Activated CD8-positive, alpha-beta T cell treated with anti-CD3 and anti-CD28 coated beads, Interleukin-2, amount 10 ng/mL, durations not matched to agents 7 days and 5 days (primary cell): ENCODE measurements at regions of chr7 and their contacts with region 1.

Region 1: DNA sequence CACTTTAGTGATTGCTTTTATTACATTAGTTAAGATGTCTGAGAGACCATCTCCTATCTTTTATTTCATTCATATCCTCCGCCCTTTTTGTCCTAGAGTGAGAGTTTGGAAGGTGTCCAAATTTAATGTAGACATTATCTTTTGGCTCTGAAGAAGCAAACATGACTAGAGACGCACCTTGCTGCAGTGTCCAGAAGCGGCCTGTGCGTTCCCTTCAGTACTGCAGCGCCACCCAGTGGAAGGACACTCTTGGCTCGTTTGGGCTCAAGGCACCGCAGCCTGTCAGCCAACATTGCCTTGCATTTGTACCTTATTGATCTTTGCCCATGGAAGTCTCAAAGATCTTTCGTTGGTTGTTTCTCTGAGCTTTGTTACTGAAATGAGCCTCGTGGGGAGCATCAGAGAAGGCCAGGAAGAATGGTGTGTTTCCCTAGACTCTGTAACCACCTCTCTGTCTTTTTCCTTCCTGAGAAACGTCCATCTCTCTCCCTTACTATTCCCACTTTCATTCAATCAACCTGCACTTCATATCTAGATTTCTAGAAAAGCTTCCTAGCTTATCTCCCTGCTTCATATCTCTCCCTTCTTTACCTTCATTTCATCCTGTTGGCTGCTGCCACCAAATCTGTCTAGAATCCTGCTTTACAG is 10.4 kb upstream of the CLCN1 start:
- DNase-seq: peak; percentile 72
- ATAC-seq: peak; percentile 57
- H3K4me3 Mint-ChIP-seq: no peak overlapping the region
- H3K27ac Mint-ChIP-seq: peak overlapping the region; percentile 9
- H3K4me1 Mint-ChIP-seq: peaks cover 51% of the 10 kb centered on the region
- H3K27me3 Mint-ChIP-seq: no peaks in the 10 kb centered on the region

Region 2: DNA sequence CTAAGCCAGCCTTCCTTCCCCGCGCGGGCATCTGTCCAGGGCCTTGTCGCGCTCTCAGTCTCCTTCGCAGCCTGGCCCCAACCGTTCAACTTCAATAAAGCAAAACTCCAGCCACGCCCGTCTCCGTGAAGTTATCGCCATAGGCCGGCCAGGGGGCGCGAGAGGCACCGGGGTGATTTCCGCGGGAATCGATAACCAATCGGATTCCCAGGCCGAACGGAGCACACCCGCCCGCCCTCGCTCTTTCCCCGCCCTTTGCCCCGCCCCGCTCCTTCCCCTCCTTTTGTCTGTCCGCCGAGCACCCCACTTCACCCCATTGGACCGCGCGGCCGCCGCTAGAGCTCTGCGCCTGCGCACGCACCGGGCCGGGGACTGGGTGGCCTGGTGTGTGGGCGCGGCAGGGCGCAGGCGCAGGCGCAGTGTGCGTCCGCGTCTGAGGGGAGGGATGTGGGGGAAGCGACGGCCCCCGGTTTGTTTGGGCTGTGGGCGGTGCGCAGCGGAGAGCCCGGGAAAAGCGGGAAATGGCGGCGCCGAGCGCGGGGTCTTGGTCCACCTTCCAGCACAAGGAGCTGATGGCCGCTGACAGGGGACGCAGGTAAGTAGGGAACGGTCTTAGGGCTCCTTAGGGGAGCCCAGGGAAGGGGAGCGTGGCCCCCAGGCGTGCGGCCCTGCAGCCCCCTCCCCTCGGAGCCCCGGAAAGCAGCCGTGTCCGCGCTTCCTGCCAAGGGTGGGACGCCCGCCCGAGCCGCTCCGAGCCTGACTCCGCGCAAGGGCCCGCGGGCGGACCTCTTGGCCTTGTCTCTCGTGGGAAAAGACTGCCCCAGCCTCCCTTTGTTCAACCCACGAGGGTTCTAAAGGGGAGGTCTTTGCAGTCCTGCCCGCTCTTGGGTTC is 17.4 kb before region 1 on chr7 and contains the start of gene CASP2:
- CTCF ChIA-PET with region 1: interaction called, 17 read pairs
- POLR2A ChIA-PET with region 1: interaction called, 5 read pairs
- DNase-seq: peak; percentile 99
- ATAC-seq: peak; percentile 97
- H3K4me3 Mint-ChIP-seq: peak within 1 kb of the TSS; percentile 93
- H3K27ac Mint-ChIP-seq: peak within 1 kb of the TSS; percentile 94
- H3K4me1 Mint-ChIP-seq: peaks cover 55% of the 10 kb centered on the region
- H3K27me3 Mint-ChIP-seq: no peaks in the 10 kb centered on the region
- total RNA-seq, gene CASP2: 111 to 115 TPM

Region 3: GRCh38 chr7:143372070-143372469 is 66.5 kb after region 1 on chr7:
- CTCF ChIA-PET with region 1: interaction called, 11 read pairs
- POLR2A ChIA-PET with region 1: interaction called, 3 read pairs
- DNase-seq: peak; percentile 60
- ATAC-seq: peak; percentile 28
- H3K4me3 Mint-ChIP-seq: no peak overlapping the region
- H3K27ac Mint-ChIP-seq: peak overlapping the region; percentile 75
- H3K4me1 Mint-ChIP-seq: peaks cover 54% of the 10 kb centered on the region
- H3K27me3 Mint-ChIP-seq: no peaks in the 10 kb centered on the region

Region 4: DNA sequence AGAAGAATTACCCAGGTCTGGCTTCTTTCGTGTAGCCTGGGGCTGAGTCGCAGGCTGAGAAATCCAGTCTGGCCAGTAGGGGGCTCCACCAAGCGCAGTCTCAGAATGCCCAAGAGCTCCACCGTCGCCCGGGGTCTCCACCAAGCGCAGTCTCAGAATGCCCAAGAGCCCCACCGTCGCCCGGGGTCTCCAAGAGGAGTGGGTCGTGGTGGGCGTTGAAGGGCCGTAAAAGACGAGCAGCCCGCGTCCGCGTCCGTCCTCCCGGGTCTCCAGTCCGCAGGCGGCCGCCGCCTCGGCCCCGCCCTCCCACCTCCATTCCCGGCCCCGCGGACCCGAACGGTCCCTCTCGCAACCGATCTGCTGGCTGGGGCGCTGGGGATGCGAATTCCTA is 74.7 kb after region 1 on chr7:
- CTCF ChIA-PET with region 1: interaction called, 13 read pairs
- POLR2A ChIA-PET with region 1: no interaction called
- DNase-seq: peak; percentile 91
- ATAC-seq: peak; percentile 53
- H3K4me3 Mint-ChIP-seq: peak overlapping the region; percentile 80
- H3K27ac Mint-ChIP-seq: peak overlapping the region; percentile 91
- H3K4me1 Mint-ChIP-seq: peaks cover 38% of the 10 kb centered on the region
- H3K27me3 Mint-ChIP-seq: no peaks in the 10 kb centered on the region